ENCODE measurements at regions of chr1 and their contacts with region 1.

Region 1: GRCh38 chr1:221203224-221204054 is 324.2 kb downstream of the HLX start:
- DNase-seq: peak; percentile 82
- H3K4me3 ChIP-seq: no peak overlapping the region
- H3K27ac ChIP-seq: no peak overlapping the region
- H3K4me1 ChIP-seq: no peaks in the 10 kb centered on the region
- H3K27me3 ChIP-seq: peaks cover 0 to 1% of the 10 kb centered on the region in 2 experiments
- CTCF ChIP-seq: peak; percentile 74 to 86
- POLR2A ChIP-seq: no peak

Region 2: DNA sequence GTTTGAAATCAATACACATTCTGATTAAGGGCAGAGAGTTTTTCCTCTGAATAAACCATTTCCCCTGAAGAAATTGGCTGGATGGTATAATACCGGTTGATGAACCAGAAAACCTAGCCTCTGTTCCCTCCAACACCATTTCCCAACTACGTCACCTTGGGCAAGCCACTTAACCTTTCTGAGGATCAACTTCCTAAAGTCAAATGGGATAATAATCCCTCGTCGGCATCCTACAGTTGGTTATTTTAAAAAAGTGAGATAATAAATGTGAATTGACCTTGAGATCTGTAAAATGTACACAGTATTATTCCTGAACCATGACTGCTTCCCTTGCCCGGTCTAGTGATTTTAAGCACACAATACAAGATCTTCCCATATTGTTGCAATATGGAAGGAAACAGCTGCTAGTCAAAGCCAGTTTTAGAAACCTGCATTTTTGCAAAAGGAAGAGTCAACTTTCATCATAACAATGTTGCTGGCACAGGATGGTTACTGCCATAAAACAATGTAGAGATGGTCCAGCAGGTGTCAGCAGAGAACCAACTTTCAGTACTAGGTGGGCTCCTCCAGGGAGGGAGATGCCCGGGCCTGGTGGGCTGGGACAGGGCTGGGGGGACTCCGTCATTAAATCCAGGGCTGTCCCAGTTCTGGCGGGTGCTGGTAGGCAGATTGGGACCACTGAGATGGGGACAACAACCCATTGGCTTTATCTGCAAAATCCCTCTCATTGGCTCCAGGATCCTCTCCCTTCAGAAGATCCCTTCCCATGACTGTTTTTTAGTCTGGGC is 329.4 kb before region 1 on chr1:
- CTCF ChIA-PET with region 1: interaction called, 111 read pairs
- POLR2A ChIA-PET with region 1: no interaction called
- dilution Hi-C with region 1: no loop called
- intact Hi-C with region 1: loop called (anchors 1 kb)
- DNase-seq: peak; percentile 93
- H3K4me3 ChIP-seq: no peak overlapping the region
- H3K27ac ChIP-seq: peak overlapping the region; percentile 0
- H3K4me1 ChIP-seq: peaks cover 37% of the 10 kb centered on the region
- H3K27me3 ChIP-seq: peaks cover 3 to 14% of the 10 kb centered on the region in 2 experiments
- CTCF ChIP-seq: peak; percentile 52 to 69
- POLR2A ChIP-seq: no peak

Region 3: DNA sequence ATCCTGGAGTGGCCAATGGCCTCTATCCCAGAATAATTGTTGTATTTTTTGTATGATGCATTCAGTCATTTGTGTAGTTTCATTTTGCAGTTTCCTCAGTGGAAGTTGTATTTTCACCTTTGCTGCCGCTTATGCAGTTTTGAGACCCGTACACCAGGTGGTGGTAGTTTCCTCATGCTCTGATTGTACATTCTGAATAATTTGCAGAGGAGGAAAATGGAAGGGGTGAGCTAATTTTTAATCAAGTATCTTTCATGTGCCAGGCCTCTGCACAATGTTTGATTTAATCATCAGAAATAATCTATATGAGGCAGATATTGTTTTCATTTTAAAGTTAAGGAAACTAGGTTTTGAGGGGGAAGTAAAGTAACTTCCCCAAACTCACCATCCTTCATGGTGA is 294.7 kb before region 1 on chr1:
- CTCF ChIA-PET with region 1: interaction called, 136 read pairs
- POLR2A ChIA-PET with region 1: no interaction called
- dilution Hi-C with region 1: no loop called
- intact Hi-C with region 1: loop called (anchors 1 kb)
- DNase-seq: peak; percentile 38
- H3K4me3 ChIP-seq: no peak overlapping the region
- H3K27ac ChIP-seq: no peak overlapping the region
- H3K4me1 ChIP-seq: no peaks in the 10 kb centered on the region
- H3K27me3 ChIP-seq: peaks cover 9 to 11% of the 10 kb centered on the region in 2 experiments
- CTCF ChIP-seq: peak; percentile 9 to 44
- POLR2A ChIP-seq: no peak

Region 4: GRCh38 chr1:221035680-221036153 is 167.7 kb before region 1 on chr1:
- CTCF ChIA-PET with region 1: interaction called, 39 read pairs
- POLR2A ChIA-PET with region 1: no interaction called
- dilution Hi-C with region 1: no loop called
- intact Hi-C with region 1: loop called (anchors 1 kb)
- DNase-seq: peak; percentile 84
- H3K4me3 ChIP-seq: peak overlapping the region in 1 of 3 experiments; percentile 42
- H3K27ac ChIP-seq: peak overlapping the region; percentile 69
- H3K4me1 ChIP-seq: peaks cover 48% of the 10 kb centered on the region
- H3K27me3 ChIP-seq: no peaks in the 10 kb centered on the region
- CTCF ChIP-seq: no peak
- POLR2A ChIP-seq: no peak

Region 5: DNA sequence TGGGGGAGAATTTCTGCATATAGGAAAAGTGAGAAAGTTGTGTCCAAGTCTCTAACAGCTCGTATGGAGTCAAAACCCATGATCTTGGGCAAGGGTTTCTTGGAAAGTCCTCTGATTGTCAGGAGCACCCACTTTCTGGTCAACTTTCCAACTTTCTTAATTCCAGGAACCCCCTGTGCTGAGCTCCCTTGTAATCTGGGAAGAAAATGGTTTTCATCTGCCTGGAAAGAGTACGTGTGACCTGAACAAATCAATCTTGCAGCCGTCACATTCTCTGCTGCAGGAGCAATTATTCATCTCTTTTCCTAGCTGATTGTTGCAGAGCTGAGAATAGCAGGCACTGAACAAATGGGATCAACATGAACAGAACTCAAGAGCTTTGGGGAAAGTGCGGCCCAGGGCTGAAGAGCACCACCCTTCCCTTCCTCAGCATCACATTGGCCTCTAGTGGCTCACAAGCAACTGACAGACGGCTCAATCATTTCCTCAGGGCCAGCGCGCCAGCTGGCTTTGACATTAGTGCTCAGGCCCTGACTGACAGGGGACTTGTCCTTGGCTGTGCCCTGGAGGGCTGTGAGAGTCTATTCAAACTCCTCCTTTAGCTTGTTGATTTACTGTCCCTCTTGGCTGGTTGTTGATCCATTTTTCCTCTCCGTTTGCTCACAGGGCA is 29.0 kb before region 1 on chr1:
- CTCF ChIA-PET with region 1: interaction called, 10 read pairs
- POLR2A ChIA-PET with region 1: no interaction called
- dilution Hi-C with region 1: no loop called
- intact Hi-C with region 1: no loop called
- DNase-seq: no peak
- H3K4me3 ChIP-seq: no peak overlapping the region
- H3K27ac ChIP-seq: no peak overlapping the region
- H3K4me1 ChIP-seq: peaks cover 6% of the 10 kb centered on the region
- H3K27me3 ChIP-seq: no peaks in the 10 kb centered on the region
- CTCF ChIP-seq: no peak
- POLR2A ChIP-seq: no peak

Region 6: GRCh38 chr1:221263831-221264767 is 60.7 kb after region 1 on chr1:
- CTCF ChIA-PET with region 1: interaction called, 20 read pairs
- POLR2A ChIA-PET with region 1: no interaction called
- dilution Hi-C with region 1: no loop called
- intact Hi-C with region 1: no loop called
- DNase-seq: peak; percentile 79
- H3K4me3 ChIP-seq: no peak overlapping the region
- H3K27ac ChIP-seq: peak overlapping the region; percentile 34
- H3K4me1 ChIP-seq: peaks cover 7% of the 10 kb centered on the region
- H3K27me3 ChIP-seq: no peaks in the 10 kb centered on the region
- CTCF ChIP-seq: peak; percentile 64 to 71
- POLR2A ChIP-seq: no peak

Region 7: DNA sequence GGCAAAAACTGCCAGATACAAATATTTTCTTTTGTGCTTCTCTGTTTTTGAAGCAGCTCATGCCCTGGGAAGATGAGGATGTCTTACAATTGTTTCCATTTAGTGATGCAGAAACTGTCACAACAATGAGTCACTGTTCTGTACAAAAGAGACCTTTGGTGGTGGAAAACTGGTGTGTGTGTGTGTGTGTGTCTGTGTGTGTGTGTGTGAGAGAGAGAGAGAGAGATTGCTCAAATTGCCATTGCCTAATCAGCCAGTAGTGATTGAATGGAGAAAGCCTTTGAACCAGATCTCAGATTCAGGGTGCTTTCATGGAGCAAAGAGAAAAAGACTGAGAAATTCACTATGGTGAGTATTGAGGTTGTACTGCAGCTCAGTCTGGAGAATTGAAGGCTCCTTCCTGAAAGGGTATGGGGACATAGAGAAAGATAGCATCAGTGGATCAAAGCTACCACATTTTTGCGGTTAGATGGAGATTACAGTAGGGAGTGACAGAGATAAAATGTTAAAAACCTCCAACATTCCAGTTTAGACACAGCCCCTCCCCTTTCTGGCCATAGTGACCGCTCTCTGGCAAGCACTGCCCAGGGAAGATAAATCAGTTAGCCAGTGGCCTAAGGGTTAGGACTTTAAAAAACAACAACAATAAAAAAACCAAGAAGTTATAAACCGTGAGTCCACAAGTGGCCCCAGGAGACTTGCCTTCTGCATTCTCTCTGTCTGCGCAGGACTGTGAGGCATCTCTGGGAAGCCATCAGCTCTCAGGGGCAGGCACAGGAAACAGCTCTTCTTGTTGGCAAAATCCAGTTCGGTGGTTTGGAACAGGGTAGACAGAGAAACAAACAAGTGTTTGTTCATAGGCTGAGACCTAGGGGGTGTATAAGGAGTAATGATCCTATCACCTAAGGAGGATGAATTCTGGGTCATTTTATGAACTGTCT is 132.0 kb after region 1 on chr1:
- CTCF ChIA-PET with region 1: no interaction called
- POLR2A ChIA-PET with region 1: no interaction called
- dilution Hi-C with region 1: no loop called
- intact Hi-C with region 1: no loop called
- DNase-seq: no peak
- H3K4me3 ChIP-seq: no peak overlapping the region
- H3K27ac ChIP-seq: no peak overlapping the region
- H3K4me1 ChIP-seq: no peaks in the 10 kb centered on the region
- H3K27me3 ChIP-seq: no peaks in the 10 kb centered on the region
- CTCF ChIP-seq: no peak
- POLR2A ChIP-seq: no peak

Measured in endothelial cell of umbilical vein (primary cell).